Gastrocnemius medialis (tissue), 4 donors: ENCODE measurements at regions of chr16 and their contacts with region 1.

Region 1: DNA sequence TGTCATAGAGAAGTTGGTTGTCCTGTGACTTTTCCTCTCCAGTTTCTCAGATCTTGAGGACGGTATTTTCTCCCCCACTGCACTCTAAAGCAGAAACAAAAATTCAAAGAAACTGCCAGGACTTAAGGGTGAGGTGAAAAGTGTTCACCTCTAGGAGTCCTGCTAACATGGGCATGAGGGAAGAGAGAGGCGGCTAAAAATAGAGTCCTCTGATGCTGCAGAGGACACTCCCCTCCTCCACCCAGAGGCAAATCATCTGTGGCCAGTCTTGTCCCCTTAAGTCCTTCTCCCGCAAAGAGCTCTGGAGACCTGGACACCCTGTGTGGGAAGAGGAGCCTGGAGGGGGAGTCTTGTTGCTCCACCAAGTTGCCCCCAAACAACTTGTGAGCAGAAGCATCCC is 4.7 kb upstream of the DDX19A start:
- DNase-seq: peak in 1 of 2 donors; percentile 30
- ATAC-seq: peak in 1 of 2 donors; percentile 44
- H3K4me3 ChIP-seq: no peak overlapping the region
- H3K27ac ChIP-seq: peak overlapping the region in 2 of 4 donors; percentile 50 to 69
- H3K4me1 ChIP-seq: peaks cover 10 to 15% of the 10 kb centered on the region in 2 donors
- H3K27me3 ChIP-seq: no peaks in the 10 kb centered on the region
- CTCF ChIP-seq: peak in 1 of 5 experiments; percentile 22
- POLR2A ChIP-seq: no peak

Region 2: DNA sequence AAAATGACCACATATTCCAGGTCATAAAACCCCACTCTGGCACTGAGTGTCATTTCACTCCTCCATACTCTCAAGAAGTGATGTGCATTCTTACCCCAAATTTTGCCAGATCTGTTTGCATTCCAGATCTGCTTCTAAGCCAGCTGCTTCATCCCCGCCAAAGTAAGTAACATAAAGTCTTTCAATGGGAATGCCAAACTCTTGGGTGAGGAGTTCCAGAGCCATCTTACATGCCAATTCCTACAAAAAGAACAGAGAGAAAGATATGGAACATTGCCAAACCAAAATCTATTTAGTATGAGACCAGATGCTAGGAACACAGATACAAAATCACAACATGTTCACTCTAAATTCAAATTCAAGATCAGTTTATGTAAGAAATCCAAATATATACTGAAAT is 65.6 kb before region 1 on chr16:
- in situ Hi-C with region 1: no loop called
- intact Hi-C with region 1: no loop called
- DNase-seq: no peak
- ATAC-seq: no peak
- H3K4me3 ChIP-seq: no peak overlapping the region
- H3K27ac ChIP-seq: no peak overlapping the region
- H3K4me1 ChIP-seq: no peaks in the 10 kb centered on the region
- H3K27me3 ChIP-seq: no peaks in the 10 kb centered on the region
- CTCF ChIP-seq: no peak
- POLR2A ChIP-seq: no peak

Region 3: GRCh38 chr16:70289229-70290098 is 52.6 kb before region 1 on chr16 and contains the start of gene AARS1:
- in situ Hi-C with region 1: loop called in 1 of 4 experiments (anchors 10 kb)
- intact Hi-C with region 1: no loop called
- DNase-seq: peak; percentile 97 to 98
- ATAC-seq: peak; percentile 99
- H3K4me3 ChIP-seq: peak within 1 kb of the TSS; percentile 69 to 82 (median 78)
- H3K27ac ChIP-seq: peak within 1 kb of the TSS; percentile 88 to 92 (median 90)
- H3K4me1 ChIP-seq: peaks cover 5% of the 10 kb centered on the region in 2 donors
- H3K27me3 ChIP-seq: no peaks in the 10 kb centered on the region
- CTCF ChIP-seq: peak in 1 of 5 experiments; percentile 8
- POLR2A ChIP-seq: peak; percentile 92 to 93
- total RNA-seq, gene AARS1: 58.0 to 80.4 (median 60.2) TPM

Region 4: GRCh38 chr16:70298988-70299938 is 42.8 kb before region 1 on chr16 and contains the start of gene DDX19B:
- in situ Hi-C with region 1: loop called in 1 of 4 experiments (anchors 10 kb)
- intact Hi-C with region 1: loop called (anchors 1 kb)
- DNase-seq: peak; percentile 48 to 71
- ATAC-seq: peak; percentile 85 to 92
- H3K4me3 ChIP-seq: peak within 1 kb of the TSS; percentile 75 to 99 (median 96)
- H3K27ac ChIP-seq: peak within 1 kb of the TSS; percentile 91 to 99 (median 96)
- H3K4me1 ChIP-seq: peaks cover 8 to 12% of the 10 kb centered on the region in 2 donors
- H3K27me3 ChIP-seq: no peaks in the 10 kb centered on the region
- CTCF ChIP-seq: no peak
- POLR2A ChIP-seq: peak; percentile 39 to 57
- total RNA-seq, gene DDX19B: 26.6 to 38.3 (median 31.9) TPM

Region 5: DNA sequence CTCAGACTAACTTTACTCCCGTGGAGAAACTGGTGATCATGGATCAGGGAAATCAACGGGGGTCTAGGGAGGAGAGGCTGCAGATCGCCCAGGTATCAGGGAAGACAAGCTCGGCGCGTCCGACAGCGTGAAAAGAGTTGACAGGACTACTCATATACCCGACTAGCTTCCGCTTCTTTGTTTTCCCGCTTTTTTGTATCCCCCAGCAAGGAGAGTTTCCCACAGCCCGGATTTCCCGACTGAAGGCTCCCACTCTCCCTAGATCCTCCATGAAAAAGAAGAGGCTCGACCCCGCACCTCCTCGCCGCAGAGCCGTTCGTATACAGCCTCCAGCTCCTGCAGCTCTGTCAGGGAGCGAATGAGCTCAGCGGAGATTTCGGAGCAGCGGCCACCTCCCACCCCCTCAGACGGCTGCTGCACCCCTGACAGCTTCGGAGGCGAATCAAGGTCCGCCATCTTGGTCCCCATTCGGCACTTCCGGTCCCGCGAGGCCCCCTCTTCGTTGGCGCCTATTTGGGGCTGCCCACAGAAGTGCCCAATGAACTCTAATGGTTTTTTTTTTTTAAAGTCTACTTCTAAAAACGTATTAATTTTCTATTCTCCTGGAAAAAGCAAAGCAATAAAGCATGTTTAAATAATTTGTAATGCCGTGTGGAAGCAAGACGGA is 181.2 kb after region 1 on chr16 and contains the start of gene COG4:
- in situ Hi-C with region 1: no loop called
- intact Hi-C with region 1: no loop called
- DNase-seq: peak; percentile 81 to 83
- ATAC-seq: peak; percentile 86 to 87
- H3K4me3 ChIP-seq: peak within 1 kb of the TSS; percentile 78 to 99 (median 90)
- H3K27ac ChIP-seq: peak within 1 kb of the TSS; percentile 88 to 95 (median 92)
- H3K4me1 ChIP-seq: peaks cover 35 to 43% of the 10 kb centered on the region in 2 donors
- H3K27me3 ChIP-seq: no peaks in the 10 kb centered on the region
- CTCF ChIP-seq: no peak
- POLR2A ChIP-seq: no peak
- total RNA-seq, gene COG4: 71.8 to 113 (median 82.0) TPM

Region 6: DNA sequence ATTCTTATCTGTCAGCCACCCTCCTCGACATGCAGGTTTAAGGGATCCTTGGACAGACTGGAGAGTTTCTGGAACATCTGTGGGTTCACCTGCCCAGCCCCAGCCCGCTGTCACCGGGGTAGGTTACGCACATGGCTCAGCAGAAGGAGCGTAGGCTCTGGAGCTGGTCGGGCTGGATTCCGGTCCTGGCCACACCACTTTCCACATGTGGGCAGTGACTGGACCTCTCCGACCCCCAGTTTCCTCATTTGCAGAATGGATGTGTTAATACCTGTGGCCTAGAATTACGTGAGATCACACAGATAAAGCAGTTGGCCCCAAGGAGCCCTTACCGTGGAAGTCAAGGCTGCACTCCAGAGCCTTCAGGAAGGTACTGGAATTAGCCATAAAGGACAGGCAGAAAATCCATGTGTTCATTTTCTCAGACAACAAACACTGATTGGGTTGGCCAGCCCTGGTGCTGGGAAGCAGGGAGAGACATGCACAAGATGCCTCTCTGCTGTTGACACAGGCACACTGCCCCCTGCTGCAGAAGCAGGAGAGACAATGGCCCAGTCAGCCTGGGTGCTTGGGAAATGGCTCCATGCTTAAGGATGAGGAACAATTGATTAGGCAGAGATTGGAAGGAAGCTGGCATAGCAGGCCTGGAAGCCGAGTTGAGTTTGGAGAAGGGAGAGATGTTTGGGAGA is 240.4 kb after region 1 on chr16:
- in situ Hi-C with region 1: no loop called
- intact Hi-C with region 1: no loop called
- DNase-seq: no peak
- ATAC-seq: no peak
- H3K4me3 ChIP-seq: no peak overlapping the region
- H3K27ac ChIP-seq: no peak overlapping the region
- H3K4me1 ChIP-seq: peaks cover 0 to 2% of the 10 kb centered on the region in 2 donors
- H3K27me3 ChIP-seq: no peaks in the 10 kb centered on the region
- CTCF ChIP-seq: no peak
- POLR2A ChIP-seq: no peak